Endothelial cell of umbilical vein (primary cell): ENCODE measurements at regions of chr15 and their contacts with region 1.

Region 1: GRCh38 chr15:59528965-59529402 is 82.6 kb upstream of the GCNT3 start:
- DNase-seq: peak; percentile 84
- H3K4me3 ChIP-seq: no peak overlapping the region
- H3K27ac ChIP-seq: no peak overlapping the region
- H3K4me1 ChIP-seq: no peaks in the 10 kb centered on the region
- H3K27me3 ChIP-seq: no peaks in the 10 kb centered on the region
- CTCF ChIP-seq: peak; percentile 78 to 84
- POLR2A ChIP-seq: no peak

Region 2: GRCh38 chr15:58957101-58957973 is 571.6 kb before region 1 on chr15:
- CTCF ChIA-PET with region 1: interaction called, 9 read pairs
- POLR2A ChIA-PET with region 1: no interaction called
- dilution Hi-C with region 1: no loop called
- intact Hi-C with region 1: loop called (anchors 1 kb)
- DNase-seq: peak; percentile 65
- H3K4me3 ChIP-seq: no peak overlapping the region
- H3K27ac ChIP-seq: no peak overlapping the region
- H3K4me1 ChIP-seq: peaks cover 5% of the 10 kb centered on the region
- H3K27me3 ChIP-seq: no peaks in the 10 kb centered on the region
- CTCF ChIP-seq: peak; percentile 76 to 83
- POLR2A ChIP-seq: no peak

Region 3: DNA sequence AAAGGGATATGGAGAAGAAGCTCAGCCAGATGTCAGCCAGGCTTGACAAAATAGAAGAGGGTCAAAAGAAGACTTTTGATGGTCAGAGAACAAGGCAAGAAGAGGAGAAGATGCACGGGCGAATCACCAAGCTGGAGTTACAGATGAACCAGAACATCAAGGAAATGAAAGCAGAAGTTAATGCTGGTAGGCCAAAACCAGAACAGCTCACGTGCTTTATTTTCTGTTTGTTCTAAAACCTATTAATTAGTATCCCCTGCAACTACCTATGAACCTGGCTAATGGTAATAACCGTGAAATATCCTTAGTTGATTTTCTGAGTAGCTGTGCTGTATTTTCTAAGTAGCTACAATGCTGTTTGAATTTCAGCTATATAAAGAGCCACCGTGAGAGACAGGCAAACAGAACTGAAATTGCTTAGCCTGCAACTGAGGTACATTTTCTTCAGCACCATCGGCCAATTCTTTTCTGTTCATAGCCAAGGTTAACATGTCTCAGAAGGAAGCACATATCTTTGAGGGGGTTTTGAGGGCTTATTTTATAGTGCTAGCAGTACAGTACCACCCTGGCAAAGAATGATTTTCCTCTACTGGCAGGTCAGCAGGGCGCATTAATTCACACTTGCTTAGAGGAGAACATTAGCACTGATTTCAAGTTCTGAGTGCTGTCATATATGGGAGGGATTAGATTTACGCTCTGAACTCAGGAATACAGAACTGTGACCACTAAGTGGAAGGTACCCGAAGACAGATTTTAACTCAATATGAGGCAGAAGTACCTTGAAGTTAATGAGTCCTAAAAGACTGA is 12.1 kb before region 1 on chr15:
- CTCF ChIA-PET with region 1: interaction called, 35 read pairs
- POLR2A ChIA-PET with region 1: no interaction called
- dilution Hi-C with region 1: no loop called
- intact Hi-C with region 1: no loop called
- DNase-seq: no peak
- H3K4me3 ChIP-seq: no peak overlapping the region
- H3K27ac ChIP-seq: no peak overlapping the region
- H3K4me1 ChIP-seq: no peaks in the 10 kb centered on the region
- H3K27me3 ChIP-seq: peaks cover 0 to 2% of the 10 kb centered on the region in 2 experiments
- CTCF ChIP-seq: no peak
- POLR2A ChIP-seq: no peak

Region 4: GRCh38 chr15:59562448-59563186 is 33.6 kb after region 1 on chr15:
- CTCF ChIA-PET with region 1: interaction called, 25 read pairs
- POLR2A ChIA-PET with region 1: no interaction called
- dilution Hi-C with region 1: no loop called
- intact Hi-C with region 1: loop called (anchors 1 kb)
- DNase-seq: no peak
- H3K4me3 ChIP-seq: no peak overlapping the region
- H3K27ac ChIP-seq: no peak overlapping the region
- H3K4me1 ChIP-seq: no peaks in the 10 kb centered on the region
- H3K27me3 ChIP-seq: peaks cover 2% of the 10 kb centered on the region in 2 experiments
- CTCF ChIP-seq: no peak
- POLR2A ChIP-seq: no peak

Region 5: GRCh38 chr15:59642351-59642750 is 113.4 kb after region 1 on chr15:
- CTCF ChIA-PET with region 1: interaction called, 60 read pairs
- POLR2A ChIA-PET with region 1: no interaction called
- dilution Hi-C with region 1: no loop called
- intact Hi-C with region 1: loop called (anchors 2 kb)
- DNase-seq: no peak
- H3K4me3 ChIP-seq: no peak overlapping the region
- H3K27ac ChIP-seq: no peak overlapping the region
- H3K4me1 ChIP-seq: no peaks in the 10 kb centered on the region
- H3K27me3 ChIP-seq: no peaks in the 10 kb centered on the region
- CTCF ChIP-seq: peak in 1 of 2 donors; percentile 8
- POLR2A ChIP-seq: no peak